Right ventricle myocardium superior (tissue), 1 donor: ENCODE measurements at regions of chr5 and their contacts with region 1.

Region 1: DNA sequence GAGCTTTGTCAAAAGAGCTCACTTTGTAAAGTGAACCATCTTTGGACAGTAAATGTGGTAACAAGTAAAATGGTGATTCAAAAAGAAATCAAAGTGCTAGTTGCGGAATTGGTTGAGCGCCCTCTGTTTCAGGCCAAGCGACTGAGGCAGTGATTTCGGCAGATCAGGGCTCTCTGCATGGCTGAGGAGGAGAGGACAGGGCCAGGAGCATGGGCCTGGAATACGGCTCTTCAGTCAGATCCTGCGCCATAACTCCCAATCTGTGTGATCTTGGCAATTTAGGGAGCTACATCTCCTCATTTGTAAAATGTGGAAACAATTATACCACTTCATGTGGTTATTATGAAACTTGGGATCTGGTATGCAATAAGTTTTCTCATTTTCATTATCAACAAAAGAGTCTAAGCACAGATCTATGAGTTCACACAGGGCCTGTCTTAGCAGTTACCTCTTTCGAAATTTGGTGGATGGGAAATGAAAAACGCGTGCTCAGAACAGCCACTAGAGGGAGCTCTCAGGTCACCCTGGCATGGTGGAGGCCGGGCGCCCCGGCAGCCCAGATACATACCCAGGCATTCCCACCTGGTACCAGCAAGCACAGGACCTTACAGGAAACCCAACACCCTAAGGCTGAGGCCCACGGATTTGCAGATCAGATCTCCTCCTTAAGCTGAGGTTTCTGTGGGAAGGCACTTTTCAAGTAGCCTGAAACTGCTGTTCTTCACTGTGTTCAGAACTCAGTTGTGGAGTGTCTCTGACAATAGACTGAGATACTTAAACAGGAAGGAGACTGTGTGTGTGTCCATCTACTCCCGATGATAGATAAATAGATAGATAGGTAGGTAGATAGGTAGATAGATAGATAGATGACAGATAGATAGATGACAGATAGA is 303.7 kb downstream of the RAB3C start:
- DNase-seq: peak; percentile 68
- ATAC-seq: peak; percentile 70

Region 2: GRCh38 chr5:58746321-58746720 is 140.2 kb before region 1 on chr5:
- intact Hi-C with region 1: no loop called
- DNase-seq: no peak
- ATAC-seq: no peak

Region 3: GRCh38 chr5:58759745-58760144 is 126.8 kb before region 1 on chr5:
- intact Hi-C with region 1: no loop called
- DNase-seq: no peak
- ATAC-seq: peak; percentile 73

Region 4: GRCh38 chr5:59007460-59008063 is 121.0 kb after region 1 on chr5:
- intact Hi-C with region 1: loop called (anchors 5 kb)
- DNase-seq: no peak
- ATAC-seq: no peak

Region 5: GRCh38 chr5:59174248-59174844 is 287.8 kb after region 1 on chr5:
- intact Hi-C with region 1: loop called (anchors 10 kb)
- DNase-seq: no peak
- ATAC-seq: peak; percentile 87